T-cell (primary cell): ENCODE measurements at regions of chr22 and their contacts with region 1.

Region 1: GRCh38 chr22:36977947-36978660 is 41.1 kb downstream of the TST start:
- DNase-seq: peak; percentile 77 to 95 (median 87)
- ATAC-seq: peak; percentile 83 to 90 (median 87)
- H3K4me3 ChIP-seq: peak overlapping the region; percentile 59 to 62
- H3K4me3 Mint-ChIP-seq: peak overlapping the region; percentile 85 to 94 (median 91)
- H3K27ac ChIP-seq: peak overlapping the region; percentile 52
- H3K27ac Mint-ChIP-seq: peak overlapping the region; percentile 92 to 93
- H3K4me1 ChIP-seq: peaks cover 0 to 13% of the 10 kb centered on the region in 2 experiments
- H3K4me1 Mint-ChIP-seq: peaks cover 8 to 14% (median 12%) of the 10 kb centered on the region in 3 donors
- H3K27me3 ChIP-seq: peaks cover 0 to 15% of the 10 kb centered on the region in 2 experiments
- H3K27me3 Mint-ChIP-seq: peaks cover 4 to 9% of the 10 kb centered on the region in 2 donors

Region 2: GRCh38 chr22:36884349-36885117 is 93.6 kb before region 1 on chr22:
- CTCF ChIA-PET with region 1: interaction called, 3 to 11 read pairs
- POLR2A ChIA-PET with region 1: no interaction called
- DNase-seq: no peak
- ATAC-seq: no peak
- H3K4me3 ChIP-seq: no peak overlapping the region
- H3K4me3 Mint-ChIP-seq: no peak overlapping the region
- H3K27ac ChIP-seq: no peak overlapping the region
- H3K27ac Mint-ChIP-seq: no peak overlapping the region
- H3K4me1 ChIP-seq: peaks cover 0 to 7% of the 10 kb centered on the region in 2 experiments
- H3K4me1 Mint-ChIP-seq: peaks cover 6 to 15% (median 12%) of the 10 kb centered on the region in 3 donors
- H3K27me3 ChIP-seq: peaks cover 0 to 10% of the 10 kb centered on the region in 2 experiments
- H3K27me3 Mint-ChIP-seq: peaks cover 13 to 22% of the 10 kb centered on the region in 2 donors